HEK293T (cell line): ENCODE measurements at regions of chr17 and their contacts with region 1.

Region 1: GRCh38 chr17:40475234-40475908 is 26.1 kb downstream of the TNS4 start:
- DNase-seq: no peak

Region 2: GRCh38 chr17:40417609-40418427 is 57.6 kb before region 1 on chr17 and contains the start of gene TOP2A:
- CTCF ChIA-PET with region 1: no interaction called
- POLR2A ChIA-PET with region 1: interaction called, 17 read pairs
- DNase-seq: peak; percentile 92

Region 3: GRCh38 chr17:40450175-40450574 is 25.2 kb before region 1 on chr17:
- CTCF ChIA-PET with region 1: interaction called, 19 read pairs
- POLR2A ChIA-PET with region 1: no interaction called
- DNase-seq: peak; percentile 27

Region 4: DNA sequence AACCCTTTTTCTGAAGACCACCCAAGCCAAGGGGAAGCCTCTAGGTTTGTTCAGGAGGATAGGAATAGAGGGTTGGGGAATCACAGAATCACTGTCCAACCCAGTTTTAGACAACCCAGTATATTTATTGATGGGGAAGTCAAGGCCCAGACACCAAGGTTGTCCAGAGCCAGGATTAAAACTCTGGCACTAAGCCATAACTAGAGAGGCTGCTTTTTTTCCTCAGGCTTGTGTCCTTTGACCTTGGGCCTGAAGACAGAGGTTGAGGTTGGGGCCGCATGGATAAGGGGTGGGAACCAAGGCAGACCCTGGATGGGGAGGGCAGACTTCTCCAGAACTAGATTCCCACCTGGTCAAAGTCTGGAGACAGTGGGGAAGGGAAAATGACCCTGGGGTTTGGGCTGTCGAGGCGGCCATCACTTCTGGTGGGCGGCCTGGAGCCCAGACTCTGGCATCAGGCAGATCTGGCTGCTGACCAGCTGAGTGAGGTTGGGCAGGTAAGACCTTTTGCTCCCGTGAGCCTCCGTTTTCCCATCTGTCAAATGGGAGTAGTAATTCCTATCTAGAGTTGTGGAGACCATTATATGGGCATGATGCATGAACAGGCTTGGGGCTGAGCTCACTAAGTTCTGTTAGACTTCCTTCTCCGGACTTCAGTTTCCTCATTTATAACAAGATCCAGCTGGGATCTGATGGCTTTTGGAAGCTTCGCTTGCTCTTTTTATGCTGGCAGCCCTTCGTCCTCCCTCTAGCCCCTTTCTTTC is 14.2 kb before region 1 on chr17:
- CTCF ChIA-PET with region 1: interaction called, 19 read pairs
- POLR2A ChIA-PET with region 1: no interaction called
- DNase-seq: no peak

Region 5: DNA sequence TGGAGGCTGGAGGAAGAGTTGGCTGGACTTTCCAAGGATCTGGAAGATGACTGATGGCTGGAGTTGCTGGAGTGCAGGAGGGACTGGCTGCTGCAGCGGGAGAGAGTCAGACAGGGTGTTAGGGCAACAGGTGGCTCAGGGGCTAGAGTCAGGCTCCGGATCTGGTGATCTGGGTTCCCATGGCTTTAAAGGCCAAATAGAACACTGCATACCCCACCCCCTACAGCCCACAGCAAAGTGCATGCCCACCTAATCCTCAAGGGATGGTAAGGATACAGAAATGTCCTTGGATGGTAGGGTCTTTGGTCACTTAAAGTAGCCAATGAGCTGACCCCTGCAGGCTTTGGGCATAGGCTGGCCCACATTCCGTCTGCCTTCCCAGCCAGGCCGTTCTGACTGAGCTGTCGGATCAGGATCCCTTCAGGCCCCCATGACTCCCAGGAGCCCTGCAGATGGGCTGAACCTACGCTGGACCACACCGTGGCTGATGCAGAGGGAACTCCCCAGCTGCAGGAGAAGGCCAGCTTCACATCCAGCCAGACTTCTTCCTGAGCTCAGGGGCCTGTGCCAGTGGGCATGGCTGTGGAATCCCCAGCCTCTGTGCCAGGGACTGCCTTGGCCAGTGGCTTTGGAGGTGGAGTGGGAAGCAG is 12.1 kb after region 1 on chr17:
- CTCF ChIA-PET with region 1: interaction called, 10 read pairs
- POLR2A ChIA-PET with region 1: no interaction called
- DNase-seq: no peak

Region 6: DNA sequence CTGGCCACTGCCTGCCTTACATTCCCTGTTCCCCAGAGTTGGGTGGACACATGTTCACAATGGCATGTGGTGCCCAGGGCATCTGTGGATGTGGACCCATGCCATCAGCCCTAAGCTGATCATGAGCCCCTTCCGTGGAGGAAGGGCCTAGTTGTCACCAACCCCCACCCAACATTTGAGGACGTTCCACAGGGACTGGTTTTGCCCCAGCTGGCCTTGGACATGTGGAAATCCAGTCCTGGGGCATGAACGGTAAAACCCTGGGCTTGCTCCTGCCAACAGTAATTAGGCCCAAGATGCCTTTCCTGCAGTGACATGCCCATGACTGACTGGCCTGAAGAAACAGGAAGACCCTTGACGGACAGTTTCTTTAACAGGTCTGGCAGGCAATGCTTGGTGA is 18.3 kb after region 1 on chr17:
- CTCF ChIA-PET with region 1: interaction called, 14 read pairs
- POLR2A ChIA-PET with region 1: interaction called, 3 read pairs
- DNase-seq: no peak

Region 7: DNA sequence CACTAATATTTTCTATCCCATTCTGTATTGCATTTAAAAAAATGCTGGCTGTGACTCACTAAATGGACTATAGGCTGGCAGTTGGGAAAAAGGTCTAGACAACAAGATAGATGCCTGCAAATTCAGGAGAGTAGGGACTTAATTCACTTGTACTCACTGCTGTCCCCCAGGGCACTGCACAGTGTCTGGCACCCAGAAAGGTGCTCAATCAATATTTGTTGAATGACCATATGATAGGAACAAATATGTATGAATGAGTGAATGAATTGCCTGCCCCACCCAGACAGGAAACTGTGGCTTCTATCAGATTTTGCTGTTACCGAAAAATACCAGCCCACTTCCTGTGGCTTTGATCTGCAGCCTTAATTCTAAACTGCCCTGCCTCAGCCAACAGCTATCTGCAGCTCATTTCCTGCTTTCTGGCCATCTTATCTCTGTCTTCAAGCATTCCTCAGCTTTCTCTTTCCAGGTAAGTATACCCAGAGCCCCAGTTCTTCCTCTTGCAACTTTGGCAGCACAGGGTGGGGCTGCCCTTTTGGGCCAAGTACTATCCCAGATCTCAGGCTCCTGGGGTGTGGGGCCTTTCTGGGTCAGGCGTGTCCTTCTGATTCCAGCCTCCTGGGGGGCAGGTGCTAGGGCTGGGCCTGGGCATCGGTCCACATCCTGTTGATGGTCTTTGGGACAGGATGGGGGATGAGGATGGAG is 41.4 kb after region 1 on chr17:
- CTCF ChIA-PET with region 1: no interaction called
- POLR2A ChIA-PET with region 1: no interaction called
- DNase-seq: no peak

Region 8: DNA sequence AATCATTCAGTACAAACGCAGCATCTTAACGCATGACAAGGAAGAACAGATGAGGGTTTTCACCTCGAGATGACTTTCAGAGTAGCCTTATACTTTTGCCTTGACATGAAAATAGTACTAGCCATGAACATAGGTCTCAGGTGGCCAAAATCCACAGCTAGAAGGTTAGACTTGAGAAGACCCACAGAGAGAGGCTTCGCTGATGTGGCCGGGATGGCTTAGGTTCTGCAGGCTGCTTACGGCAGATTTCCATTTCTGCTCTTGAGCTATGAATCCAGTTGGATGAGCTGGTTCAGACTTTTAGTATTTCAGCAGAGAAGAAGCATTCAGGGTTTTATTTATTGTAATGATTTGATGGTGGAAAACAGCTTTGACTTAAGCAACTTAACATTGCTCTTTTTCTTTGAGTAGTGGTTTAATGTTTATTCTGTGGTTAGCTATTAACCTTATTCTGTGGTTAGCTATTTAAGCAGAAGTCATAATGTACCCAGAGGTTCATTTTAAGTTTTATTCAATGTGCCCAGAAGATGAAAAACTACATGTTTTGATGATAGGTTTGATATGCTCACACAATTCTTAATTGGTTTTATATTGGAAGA is 220.6 kb after region 1 on chr17:
- CTCF ChIA-PET with region 1: no interaction called
- POLR2A ChIA-PET with region 1: no interaction called
- DNase-seq: no peak